Activated CD8-positive, alpha-beta T cell treated with anti-CD3 and anti-CD28 coated beads, Interleukin-2, amount 10 ng/mL, durations not matched to agents 7 days and 5 days (primary cell): ENCODE measurements at regions of chr12 and their contacts with region 1.

Region 1: GRCh38 chr12:31267966-31268365 is 58.0 kb downstream of the SINHCAF start:
- DNase-seq: no peak
- ATAC-seq: no peak
- H3K4me3 Mint-ChIP-seq: no peak overlapping the region
- H3K27ac Mint-ChIP-seq: no peak overlapping the region
- H3K4me1 Mint-ChIP-seq: no peaks in the 10 kb centered on the region
- H3K27me3 Mint-ChIP-seq: no peaks in the 10 kb centered on the region

Region 2: DNA sequence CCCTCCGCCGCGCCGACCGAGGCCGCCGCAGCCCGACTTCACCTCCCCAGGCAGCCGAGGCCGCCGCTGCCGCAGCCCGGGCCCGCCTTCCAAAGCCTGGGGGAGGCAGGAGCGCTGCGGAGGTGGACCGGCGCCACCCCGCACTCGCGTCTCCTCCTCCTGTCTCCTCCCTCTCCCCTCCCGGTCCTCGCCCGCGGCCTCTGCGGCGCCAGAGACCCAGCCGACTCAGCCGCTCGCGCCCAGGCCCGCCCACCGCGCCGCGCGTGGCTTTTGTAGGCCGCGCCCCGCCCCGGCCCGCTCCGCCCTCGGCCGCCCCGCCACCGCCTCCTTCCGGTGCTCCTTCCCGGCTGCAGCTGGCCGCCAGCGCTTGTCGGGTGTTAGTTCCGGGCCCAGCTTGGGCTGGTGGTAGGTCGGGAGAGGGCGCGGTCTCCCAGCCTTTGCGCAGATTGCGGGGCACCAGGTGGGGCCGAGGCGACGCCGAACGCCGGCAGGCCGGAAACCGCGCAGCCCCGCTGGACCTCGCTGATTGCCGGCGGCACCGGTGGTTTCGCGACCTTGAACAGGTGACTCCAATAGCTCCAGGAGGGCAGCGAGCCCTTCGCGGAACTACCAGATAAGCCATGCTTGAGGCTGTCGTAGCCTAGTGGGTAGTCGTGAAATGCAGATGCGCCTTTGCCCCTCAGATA is 513.1 kb before region 1 on chr12 and contains the start of gene CAPRIN2:
- CTCF ChIA-PET with region 1: no interaction called
- POLR2A ChIA-PET with region 1: no interaction called
- DNase-seq: peak; percentile 93
- ATAC-seq: peak; percentile 94
- H3K4me3 Mint-ChIP-seq: peak within 1 kb of the TSS; percentile 87
- H3K27ac Mint-ChIP-seq: peak within 1 kb of the TSS; percentile 82
- H3K4me1 Mint-ChIP-seq: peaks cover 17% of the 10 kb centered on the region
- H3K27me3 Mint-ChIP-seq: peaks cover 4% of the 10 kb centered on the region
- total RNA-seq, gene CAPRIN2: 8.9 to 10.7 TPM

Region 3: DNA sequence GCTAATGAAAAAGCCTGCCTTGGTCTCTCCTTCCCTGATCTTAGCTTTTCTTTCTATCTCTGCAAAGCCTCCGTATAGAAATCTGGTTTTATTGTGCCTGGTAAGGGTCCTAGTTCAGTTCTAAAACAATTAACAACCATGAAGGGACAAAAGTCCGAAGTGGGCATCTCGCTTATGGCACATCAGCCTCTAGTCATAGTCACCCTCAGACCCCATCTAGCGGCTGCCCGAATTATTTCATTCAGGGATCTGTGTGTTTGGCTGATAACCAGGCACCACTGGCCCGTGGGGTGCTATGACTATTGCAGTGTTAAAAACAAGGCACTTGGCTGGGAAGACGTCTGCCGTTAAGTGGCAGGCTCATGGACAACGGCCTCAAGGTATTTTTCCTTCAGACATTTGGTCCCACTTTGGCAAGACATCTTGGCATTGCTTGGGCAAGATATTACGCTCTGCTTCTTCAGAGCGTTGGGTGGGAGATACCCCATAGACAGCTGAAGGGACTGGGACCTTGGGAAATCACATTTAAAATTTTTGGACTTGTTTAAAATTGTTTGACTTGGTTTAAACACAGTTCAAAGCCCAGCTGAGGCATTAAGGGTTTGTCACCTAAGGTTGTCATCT is 29.1 kb before region 1 on chr12:
- CTCF ChIA-PET with region 1: interaction called, 16 read pairs
- POLR2A ChIA-PET with region 1: no interaction called
- DNase-seq: peak; percentile 71
- ATAC-seq: peak; percentile 85
- H3K4me3 Mint-ChIP-seq: no peak overlapping the region
- H3K27ac Mint-ChIP-seq: no peak overlapping the region
- H3K4me1 Mint-ChIP-seq: peaks cover 5% of the 10 kb centered on the region
- H3K27me3 Mint-ChIP-seq: peaks cover 9% of the 10 kb centered on the region

Region 4: DNA sequence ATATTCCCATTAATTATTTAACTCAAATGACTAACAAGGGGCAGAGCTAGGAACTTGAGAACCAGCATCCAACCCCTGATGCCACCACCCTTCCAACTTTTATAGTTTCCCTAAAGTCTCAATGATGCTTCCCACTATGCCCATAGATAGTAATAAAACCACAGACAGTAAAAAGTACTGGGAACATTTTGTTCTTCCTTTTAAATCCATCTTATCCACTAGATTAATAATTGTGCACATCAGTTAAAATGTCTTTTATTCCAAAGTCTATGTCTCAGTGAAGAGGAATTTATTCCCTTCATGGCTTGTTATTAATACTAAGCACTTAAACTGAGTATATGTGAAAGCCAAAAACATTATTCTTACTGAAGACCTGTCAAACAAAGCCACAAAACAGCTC is 12.2 kb after region 1 on chr12:
- CTCF ChIA-PET with region 1: interaction called, 14 read pairs
- POLR2A ChIA-PET with region 1: no interaction called
- DNase-seq: no peak
- ATAC-seq: no peak
- H3K4me3 Mint-ChIP-seq: no peak overlapping the region
- H3K27ac Mint-ChIP-seq: no peak overlapping the region
- H3K4me1 Mint-ChIP-seq: no peaks in the 10 kb centered on the region
- H3K27me3 Mint-ChIP-seq: no peaks in the 10 kb centered on the region

Region 5: DNA sequence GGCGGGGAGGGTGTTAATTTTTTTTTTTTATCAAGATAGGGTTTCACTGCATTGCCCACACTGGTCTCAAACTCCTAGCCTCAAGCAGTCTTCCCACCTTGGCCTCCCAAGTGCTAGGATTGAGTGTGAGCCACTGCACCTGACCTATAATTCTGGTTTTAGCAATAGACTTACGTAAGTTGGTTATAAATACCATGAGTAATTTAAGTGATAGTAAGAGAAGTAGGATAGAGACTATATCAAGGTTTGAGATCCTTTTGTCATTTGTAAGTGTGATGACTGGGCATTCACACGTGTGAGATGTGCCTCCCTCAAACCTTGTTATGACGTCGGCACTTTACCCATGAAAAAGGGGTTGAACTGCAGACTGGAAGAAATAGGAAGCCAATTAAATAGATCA is 35.5 kb after region 1 on chr12:
- CTCF ChIA-PET with region 1: interaction called, 18 read pairs
- POLR2A ChIA-PET with region 1: no interaction called
- DNase-seq: no peak
- ATAC-seq: no peak
- H3K4me3 Mint-ChIP-seq: no peak overlapping the region
- H3K27ac Mint-ChIP-seq: no peak overlapping the region
- H3K4me1 Mint-ChIP-seq: peaks cover 11% of the 10 kb centered on the region
- H3K27me3 Mint-ChIP-seq: no peaks in the 10 kb centered on the region

Region 6: DNA sequence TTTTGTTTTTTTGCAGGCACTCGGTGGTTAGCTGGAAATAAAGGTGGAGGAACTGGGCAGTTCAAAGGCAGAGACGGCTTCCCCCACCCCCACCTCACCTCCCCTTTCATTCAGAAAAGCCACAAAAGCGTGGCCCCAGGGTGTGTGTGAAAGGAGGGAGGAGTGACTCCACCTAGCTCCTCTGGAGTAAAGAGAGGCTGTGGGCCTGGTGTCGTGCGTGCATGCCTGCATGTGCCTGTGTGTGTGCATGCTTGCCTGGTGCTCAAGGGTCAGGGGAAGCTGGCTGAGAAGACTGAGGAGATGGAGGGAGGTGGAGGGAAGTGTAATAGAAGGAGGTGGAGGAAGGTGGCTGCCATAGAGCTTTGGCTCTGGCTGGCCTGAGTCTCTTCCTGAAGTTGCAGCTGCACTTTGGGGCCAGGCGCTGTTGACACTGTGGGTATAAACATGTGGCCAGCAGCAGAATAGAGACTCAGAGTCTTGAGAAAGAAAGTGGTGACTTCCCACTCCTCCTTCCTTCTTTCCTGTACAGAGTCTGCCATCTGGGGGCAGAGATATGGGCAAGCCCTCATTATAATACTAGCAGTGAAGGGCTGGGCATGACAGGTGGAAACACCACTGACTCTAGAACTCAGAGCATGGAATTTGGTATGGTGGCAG is 94.9 kb after region 1 on chr12:
- CTCF ChIA-PET with region 1: interaction called, 22 read pairs
- POLR2A ChIA-PET with region 1: interaction called, 4 read pairs
- DNase-seq: peak; percentile 70
- ATAC-seq: peak; percentile 86
- H3K4me3 Mint-ChIP-seq: peak overlapping the region; percentile 49
- H3K27ac Mint-ChIP-seq: peak overlapping the region; percentile 87
- H3K4me1 Mint-ChIP-seq: peaks cover 22% of the 10 kb centered on the region
- H3K27me3 Mint-ChIP-seq: no peaks in the 10 kb centered on the region